ENCODE measurements at regions of chr7 and their contacts with region 1.

Region 1: GRCh38 chr7:134605973-134606923 is 40.4 kb upstream of the BPGM start:
- DNase-seq: peak; percentile 59

Region 2: DNA sequence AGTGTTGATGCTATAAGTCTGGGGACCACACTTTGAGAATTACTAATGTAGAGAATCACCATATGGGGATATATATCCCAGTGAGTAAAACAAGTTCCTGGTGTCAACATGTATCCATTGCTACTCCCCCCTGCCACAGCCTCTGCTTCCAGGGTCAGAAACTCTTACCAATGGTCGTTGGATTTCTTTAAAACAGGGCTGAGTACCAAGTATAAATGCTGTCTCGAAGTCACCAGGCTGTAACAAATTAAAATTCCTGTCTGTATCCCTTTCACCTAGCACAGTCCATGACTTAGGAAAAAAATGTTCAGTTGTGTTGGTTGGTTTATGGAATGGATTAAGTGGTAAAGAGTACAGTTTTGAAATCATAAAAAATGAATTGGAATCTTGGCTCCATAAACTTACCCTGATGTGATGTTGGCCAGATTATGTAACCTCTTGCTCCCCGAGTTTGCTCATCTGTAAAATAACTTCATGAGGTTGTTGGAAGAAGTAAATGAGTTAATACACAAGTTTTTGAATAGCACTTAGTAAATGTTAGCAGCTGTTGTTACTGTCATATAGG is 843.1 kb before region 1 on chr7:
- in situ Hi-C with region 1: no loop called
- DNase-seq: no peak

Region 3: DNA sequence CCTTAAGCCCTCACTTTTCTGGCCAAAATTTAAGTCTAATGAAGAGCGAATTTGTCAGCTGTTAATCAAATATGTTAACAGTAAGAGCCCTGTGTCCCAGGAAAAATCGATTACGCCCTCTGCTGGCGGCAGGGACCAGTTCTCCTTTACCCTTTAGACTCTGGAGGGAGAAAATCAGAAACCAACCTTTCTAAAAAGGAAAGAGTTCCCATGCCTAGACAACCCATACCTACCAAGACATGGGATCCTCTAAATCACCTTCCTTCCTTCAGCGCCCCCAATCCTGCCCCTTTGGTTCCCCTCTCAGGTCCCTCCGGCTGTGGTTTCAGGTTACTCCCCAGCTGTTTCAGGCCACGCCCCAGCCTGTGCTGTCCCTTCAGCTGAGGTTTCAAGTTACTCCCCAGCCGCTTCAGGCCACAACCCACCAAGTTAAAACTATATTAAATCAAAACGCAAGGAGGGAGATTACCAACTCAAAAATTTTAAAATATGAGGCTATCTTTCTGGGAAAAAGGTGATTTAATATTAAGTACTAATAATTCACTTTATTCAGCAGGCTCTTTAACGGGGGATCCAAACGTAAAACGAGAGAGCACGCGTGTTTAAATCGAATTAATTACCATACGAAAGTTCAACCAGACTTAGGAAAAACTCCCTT is 58.7 kb before region 1 on chr7:
- in situ Hi-C with region 1: loop called (anchors 10 kb)
- DNase-seq: peak; percentile 79

Measured in Caki2 (cell line).